ENCODE measurements at regions of chr5 and their contacts with region 1.

Region 1: DNA sequence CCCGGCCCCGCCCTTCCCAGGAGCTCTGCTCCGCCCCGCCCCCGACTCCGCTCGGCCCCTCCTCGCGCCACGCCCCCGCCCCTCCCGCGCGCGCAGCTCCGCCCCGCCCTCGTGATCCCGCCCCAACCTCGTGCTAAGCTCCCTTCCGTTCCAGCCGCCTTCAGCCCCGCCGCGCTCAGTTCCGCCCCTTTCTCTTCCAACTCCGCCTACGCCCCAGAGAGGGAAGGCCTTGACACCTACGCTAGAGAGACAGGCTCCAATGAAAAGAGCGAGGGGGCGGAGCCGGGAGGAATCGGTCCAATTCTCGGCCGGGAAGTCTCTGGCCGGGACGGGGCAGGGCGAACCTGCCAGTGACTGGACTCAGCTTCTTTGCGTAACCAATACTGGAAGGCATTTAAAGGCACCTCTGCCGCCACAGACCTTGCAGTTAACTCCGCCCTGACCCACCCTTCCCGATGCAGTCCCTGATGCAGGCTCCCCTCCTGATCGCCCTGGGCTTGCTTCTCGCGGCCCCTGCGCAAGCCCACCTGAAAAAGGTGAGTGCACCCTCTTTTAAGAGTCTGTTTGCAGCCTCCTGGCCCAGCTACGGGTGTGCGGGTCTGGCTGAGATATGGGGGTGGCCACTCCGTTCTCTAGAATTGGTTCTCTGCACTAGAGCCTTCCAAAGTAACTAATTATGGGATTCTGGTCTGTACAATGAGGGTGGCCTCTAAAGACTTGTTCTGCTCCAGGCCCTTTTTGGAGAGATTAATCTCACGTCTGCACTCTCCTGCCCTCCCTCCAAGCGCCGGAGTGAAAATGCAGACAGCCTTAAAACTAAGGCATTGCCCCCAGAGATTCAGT is at the start of gene GM2A:
- DNase-seq: peak; percentile 100
- ATAC-seq: peak; percentile 96
- H3K4me3 Mint-ChIP-seq: peak within 1 kb of the TSS; percentile 90
- H3K27ac Mint-ChIP-seq: peak within 1 kb of the TSS; percentile 92
- H3K4me1 Mint-ChIP-seq: peaks cover 35% of the 10 kb centered on the region
- H3K27me3 Mint-ChIP-seq: peaks cover 6% of the 10 kb centered on the region
- CTCF ChIP-seq: no peak
- total RNA-seq, gene GM2A: 33.1 to 36.2 TPM (median 33.2 TPM) in 3 replicates

Region 2: GRCh38 chr5:151174612-151175101 is 78.3 kb before region 1 on chr5:
- CTCF ChIA-PET with region 1: no interaction called
- POLR2A ChIA-PET with region 1: no interaction called
- DNase-seq: no peak
- ATAC-seq: peak; percentile 80
- H3K4me3 Mint-ChIP-seq: no peak overlapping the region
- H3K27ac Mint-ChIP-seq: peak overlapping the region; percentile 55; the same call in 1 of the 2 replicates
- H3K4me1 Mint-ChIP-seq: peaks cover 7% of the 10 kb centered on the region
- H3K27me3 Mint-ChIP-seq: no peaks in the 10 kb centered on the region
- CTCF ChIP-seq: no peak

Region 3: DNA sequence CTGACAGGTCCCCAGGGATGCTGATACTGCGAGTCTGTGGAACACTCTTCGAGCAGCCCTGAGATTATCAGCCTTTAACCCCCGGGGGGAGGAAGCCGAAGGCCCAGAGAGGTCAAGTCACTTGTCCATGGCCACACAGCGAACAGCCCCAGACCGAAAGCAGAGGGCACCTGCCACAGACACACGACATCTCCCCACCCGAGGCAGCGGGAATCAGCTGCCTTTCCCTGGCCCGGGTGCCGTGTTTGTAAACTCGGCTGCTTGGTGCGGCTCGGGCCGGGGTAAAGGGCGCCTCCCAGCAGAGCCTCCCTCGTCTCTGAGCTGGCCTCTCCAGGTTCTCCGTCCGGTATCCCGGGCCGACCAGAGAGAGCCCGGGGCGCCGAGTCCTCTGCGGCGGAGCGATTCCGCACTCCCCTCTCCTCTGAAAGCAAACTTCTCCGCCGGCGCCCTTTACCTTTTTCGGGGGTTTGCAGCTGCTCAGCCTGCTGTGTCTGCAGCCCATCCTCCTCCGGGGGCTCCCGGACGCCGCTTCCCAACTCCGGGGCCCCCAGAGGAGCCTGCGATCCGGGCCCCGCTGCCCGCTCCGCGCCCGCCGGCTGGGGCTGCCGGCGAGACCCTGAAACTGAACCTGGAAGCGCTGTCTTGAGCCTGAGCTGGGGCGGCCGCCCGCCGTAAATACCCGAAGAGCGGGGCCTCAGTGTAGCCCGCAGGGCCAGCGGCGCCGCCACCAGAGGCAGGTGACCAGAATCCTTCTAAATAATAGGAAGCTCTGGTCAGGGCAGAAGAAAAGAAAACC is 29.3 kb before region 1 on chr5 and contains the start of gene CCDC69:
- CTCF ChIA-PET with region 1: interaction called, 15 read pairs
- POLR2A ChIA-PET with region 1: interaction called, 22 read pairs
- DNase-seq: peak; percentile 79
- ATAC-seq: peak; percentile 91
- H3K4me3 Mint-ChIP-seq: peak within 1 kb of the TSS; percentile 78
- H3K27ac Mint-ChIP-seq: no peak within 1 kb of the TSS
- H3K4me1 Mint-ChIP-seq: peaks cover 25% of the 10 kb centered on the region
- H3K27me3 Mint-ChIP-seq: no peaks in the 10 kb centered on the region; the same call in 1 of the 2 replicates
- CTCF ChIP-seq: no peak
- total RNA-seq, gene CCDC69: 8.2 to 12.4 TPM (median 8.6 TPM) in 3 replicates

Region 4: GRCh38 chr5:151298063-151298855 is 45.3 kb after region 1 on chr5:
- CTCF ChIA-PET with region 1: interaction called, 16 read pairs
- POLR2A ChIA-PET with region 1: no interaction called
- DNase-seq: peak; percentile 49
- ATAC-seq: peak; percentile 87
- H3K4me3 Mint-ChIP-seq: no peak overlapping the region
- H3K27ac Mint-ChIP-seq: no peak overlapping the region
- H3K4me1 Mint-ChIP-seq: peaks cover 11% of the 10 kb centered on the region
- H3K27me3 Mint-ChIP-seq: no peaks in the 10 kb centered on the region; the same call in 1 of the 2 replicates
- CTCF ChIP-seq: no peak

Region 5: GRCh38 chr5:151315998-151316597 is 63.1 kb after region 1 on chr5:
- CTCF ChIA-PET with region 1: interaction called, 20 read pairs
- POLR2A ChIA-PET with region 1: interaction called, 3 read pairs
- DNase-seq: peak; percentile 78
- ATAC-seq: peak; percentile 76
- H3K4me3 Mint-ChIP-seq: no peak overlapping the region
- H3K27ac Mint-ChIP-seq: no peak overlapping the region
- H3K4me1 Mint-ChIP-seq: peaks cover 18% of the 10 kb centered on the region
- H3K27me3 Mint-ChIP-seq: no peaks in the 10 kb centered on the region
- CTCF ChIP-seq: peak; percentile 78